ENCODE measurements at regions of chr21 and their contacts with region 1.

Region 1: DNA sequence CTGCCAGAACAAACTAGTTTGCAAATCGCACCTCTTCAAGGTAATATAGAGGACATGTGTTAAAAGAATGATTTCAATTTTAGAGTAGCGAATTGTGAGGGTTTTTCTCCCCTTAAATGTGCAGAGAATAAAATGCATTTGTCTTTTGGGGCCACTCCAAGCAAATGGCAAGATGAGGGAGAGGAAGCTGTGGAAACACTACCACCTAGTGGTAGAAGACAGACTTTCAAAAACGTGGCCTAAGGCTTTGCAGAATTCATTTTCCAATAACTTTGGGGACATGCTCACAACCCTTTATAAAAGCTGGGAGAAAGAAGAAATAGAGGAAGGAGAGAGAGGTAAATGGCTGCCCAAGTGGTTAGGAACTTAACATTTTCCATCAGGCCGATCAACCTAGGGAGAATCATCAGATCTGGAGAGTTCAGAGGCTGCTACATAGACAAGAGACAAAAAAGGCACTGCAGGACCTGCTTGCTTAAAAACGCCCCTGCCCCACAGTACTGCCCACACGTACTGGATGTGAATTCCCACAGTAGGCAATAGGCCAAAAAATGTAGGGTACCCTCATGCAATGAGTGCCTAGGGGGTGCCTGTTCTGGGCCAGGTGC is 15.7 kb upstream of the RCAN1 start:
- H3K4me3 ChIP-seq: no peak overlapping the region
- H3K27ac ChIP-seq: no peak overlapping the region
- H3K4me1 ChIP-seq: no peaks in the 10 kb centered on the region
- CTCF ChIP-seq: peak; percentile 75

Region 2: DNA sequence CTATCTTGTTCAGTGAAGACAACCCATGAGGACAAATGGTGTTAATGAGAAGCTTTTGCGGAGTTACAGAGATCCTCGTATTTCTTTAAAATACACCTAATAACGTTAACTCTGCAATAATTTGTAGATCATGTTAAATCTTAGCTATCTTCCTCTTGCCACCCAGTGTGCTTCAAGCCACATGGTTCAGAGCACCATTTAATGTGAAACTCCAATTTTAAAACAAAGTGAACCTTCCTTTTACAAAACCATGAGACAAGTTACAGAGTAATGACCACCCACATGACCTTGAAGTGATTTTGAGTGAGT is 268.6 kb before region 1 on chr21:
- CTCF ChIA-PET with region 1: interaction called, 17 read pairs
- POLR2A ChIA-PET with region 1: no interaction called
- H3K4me3 ChIP-seq: no peak overlapping the region
- H3K27ac ChIP-seq: no peak overlapping the region
- H3K4me1 ChIP-seq: no peaks in the 10 kb centered on the region
- CTCF ChIP-seq: no peak

Region 3: DNA sequence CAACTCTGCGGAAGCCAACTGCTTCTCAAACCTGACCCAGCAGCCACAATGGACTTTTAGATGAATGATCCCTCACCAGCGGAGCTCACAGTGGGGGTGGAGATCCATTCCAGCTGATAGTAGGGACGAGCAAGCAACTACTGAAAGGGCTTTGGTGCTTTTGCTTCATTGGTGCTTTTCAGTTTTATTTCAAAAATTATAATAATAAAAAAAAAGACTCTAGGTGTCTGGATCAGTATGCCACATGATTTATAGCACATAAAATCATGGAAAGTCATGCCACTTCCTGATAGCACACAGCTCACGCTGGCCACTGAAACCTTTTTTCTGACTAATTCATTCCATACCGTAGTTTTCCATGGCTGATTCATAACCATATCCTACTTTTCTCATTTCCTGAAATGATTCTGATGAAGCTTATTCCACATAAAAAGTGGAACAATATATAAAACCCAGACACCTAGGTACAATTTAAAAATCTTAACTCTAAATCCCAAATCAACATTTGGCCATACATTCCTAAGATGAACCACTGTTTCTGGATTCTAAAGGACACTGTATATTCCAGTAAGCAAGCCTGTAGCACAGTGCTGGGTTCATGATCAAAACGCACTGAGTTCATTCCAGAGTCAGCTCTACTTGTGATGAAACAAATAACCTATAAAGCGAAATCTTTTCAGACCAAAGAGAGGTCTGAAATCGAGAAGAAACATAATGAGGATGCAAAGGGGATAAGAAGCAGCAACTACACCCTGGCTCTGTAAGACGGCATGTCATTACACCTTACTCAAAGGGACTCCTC is 77.3 kb before region 1 on chr21:
- CTCF ChIA-PET with region 1: no interaction called
- POLR2A ChIA-PET with region 1: no interaction called
- H3K4me3 ChIP-seq: no peak overlapping the region
- H3K27ac ChIP-seq: no peak overlapping the region
- H3K4me1 ChIP-seq: no peaks in the 10 kb centered on the region
- CTCF ChIP-seq: no peak

Region 4: GRCh38 chr21:34613679-34614632 is 16.7 kb before region 1 on chr21:
- CTCF ChIA-PET with region 1: interaction called, 20 read pairs
- POLR2A ChIA-PET with region 1: no interaction called
- H3K4me3 ChIP-seq: peak overlapping the region; percentile 78
- H3K27ac ChIP-seq: peak overlapping the region; percentile 72; the same call in 1 of the 2 replicates
- H3K4me1 ChIP-seq: peaks cover 2% of the 10 kb centered on the region
- CTCF ChIP-seq: no peak

Region 5: GRCh38 chr21:34619841-34620665 is 10.6 kb before region 1 on chr21:
- CTCF ChIA-PET with region 1: interaction called, 16 read pairs
- POLR2A ChIA-PET with region 1: no interaction called
- H3K4me3 ChIP-seq: no peak overlapping the region
- H3K27ac ChIP-seq: no peak overlapping the region
- H3K4me1 ChIP-seq: no peaks in the 10 kb centered on the region
- CTCF ChIP-seq: no peak